Adrenal gland (tissue), 19 donors: ENCODE measurements at regions of chr19 and their contacts with region 1.

Region 1: DNA sequence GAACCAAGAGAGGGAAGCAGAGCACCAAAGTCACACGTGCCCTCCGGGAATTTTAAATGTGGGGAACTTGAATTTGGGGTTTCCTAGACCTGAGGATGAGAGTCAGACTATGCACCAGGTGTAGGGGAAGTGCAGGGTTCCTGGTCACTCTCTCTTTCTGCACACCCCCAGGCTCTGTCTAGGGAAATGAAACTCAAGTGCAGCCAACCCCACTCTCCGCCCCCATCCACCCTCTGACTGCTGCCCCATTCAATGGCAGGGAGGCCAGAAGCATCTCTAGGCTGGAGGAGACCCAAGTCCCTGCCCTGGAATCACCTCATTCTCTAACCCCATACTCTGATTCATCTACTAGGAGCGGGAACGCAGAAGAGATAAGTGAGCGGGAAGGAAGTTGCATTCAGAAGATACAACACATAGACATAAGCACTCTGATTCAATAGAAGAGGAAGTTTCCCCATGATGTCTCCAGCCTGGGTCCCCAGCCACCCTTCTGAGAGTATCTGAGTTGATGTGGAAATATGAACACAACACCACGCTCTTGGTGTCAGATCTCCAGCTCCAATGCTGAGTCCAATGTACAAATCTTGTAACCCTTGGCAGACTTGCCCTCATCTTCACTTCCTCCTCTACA is 4.7 kb upstream of the SIGLEC14 start:
- DNase-seq: peak in 5 of 7 donors; percentile 29 to 62 (median 44)
- H3K4me3 ChIP-seq: no peak overlapping the region
- H3K27ac ChIP-seq: peak overlapping the region in 1 of 5 donors; percentile 52
- H3K4me1 ChIP-seq: no peaks in the 10 kb centered on the region
- H3K27me3 ChIP-seq: no peaks in the 10 kb centered on the region
- CTCF ChIP-seq: no peak
- POLR2A ChIP-seq: no peak

Region 2: DNA sequence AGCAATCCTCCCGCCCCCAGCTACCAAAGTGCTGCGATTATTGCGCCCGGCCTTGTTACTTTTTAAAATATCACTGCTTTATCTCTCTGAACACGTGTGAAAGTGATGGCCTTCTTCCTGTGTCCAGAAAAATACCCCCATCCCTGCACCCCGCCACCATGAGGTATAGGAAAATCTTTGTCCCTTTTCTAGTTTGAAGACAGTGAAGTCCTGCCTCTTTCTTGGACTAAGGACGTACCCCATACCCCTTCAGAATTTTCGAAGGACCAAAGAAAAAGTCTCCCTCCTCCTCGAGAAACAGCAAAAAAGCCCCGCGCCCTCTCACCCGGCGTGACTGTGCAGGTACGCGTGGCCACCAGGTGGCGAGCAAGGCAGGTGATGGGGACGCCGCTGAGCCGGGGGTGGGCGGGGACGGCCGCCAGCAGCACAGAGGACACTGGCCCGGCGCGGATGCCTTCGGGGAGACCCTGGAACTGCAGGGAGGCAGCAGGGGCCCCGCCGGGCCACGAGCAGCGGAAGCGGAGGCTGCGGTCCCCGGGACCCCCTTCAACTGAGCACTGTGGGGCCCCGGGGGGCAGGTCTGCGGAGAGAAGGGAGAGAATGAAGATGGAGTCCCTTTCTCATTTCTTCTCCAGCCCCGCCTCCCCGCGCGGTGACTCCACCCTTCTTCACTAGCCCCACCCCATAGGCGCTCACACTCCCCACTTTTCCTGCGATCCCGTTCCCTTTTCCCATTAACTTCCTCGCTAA is 312.6 kb before region 1 on chr19:
- intact Hi-C with region 1: loop called in 1 of 2 experiments (anchors 10 kb)
- DNase-seq: peak; percentile 80 to 90 (median 86)
- H3K4me3 ChIP-seq: peak overlapping the region in 2 of 4 donors; percentile 44 to 75
- H3K27ac ChIP-seq: peak overlapping the region in 4 of 5 donors; percentile 13 to 87 (median 44)
- H3K4me1 ChIP-seq: peaks cover 7 to 14% of the 10 kb centered on the region in 2 donors
- H3K27me3 ChIP-seq: no peaks in the 10 kb centered on the region
- CTCF ChIP-seq: peak; percentile 74 to 94 (median 82)
- POLR2A ChIP-seq: no peak

Region 3: GRCh38 chr19:51460164-51460992 is 191.0 kb before region 1 on chr19:
- intact Hi-C with region 1: loop called in 1 of 2 experiments (anchors 10 kb)
- DNase-seq: peak in 1 of 7 donors; percentile 23
- H3K4me3 ChIP-seq: no peak overlapping the region
- H3K27ac ChIP-seq: peak overlapping the region in 1 of 5 donors; percentile 68
- H3K4me1 ChIP-seq: no peaks in the 10 kb centered on the region
- H3K27me3 ChIP-seq: peaks cover 5% of the 10 kb centered on the region
- CTCF ChIP-seq: no peak
- POLR2A ChIP-seq: no peak

Region 4: GRCh38 chr19:51479531-51480331 is 171.6 kb before region 1 on chr19:
- intact Hi-C with region 1: loop called in 1 of 2 experiments (anchors 2 kb)
- DNase-seq: peak in 1 of 7 donors; percentile 9
- H3K4me3 ChIP-seq: no peak overlapping the region
- H3K27ac ChIP-seq: no peak overlapping the region
- H3K4me1 ChIP-seq: no peaks in the 10 kb centered on the region
- H3K27me3 ChIP-seq: peaks cover 10% of the 10 kb centered on the region
- CTCF ChIP-seq: no peak
- POLR2A ChIP-seq: no peak